Right lobe of liver (tissue), 6 donors: ENCODE measurements at regions of chr17 and their contacts with region 1.

Region 1: DNA sequence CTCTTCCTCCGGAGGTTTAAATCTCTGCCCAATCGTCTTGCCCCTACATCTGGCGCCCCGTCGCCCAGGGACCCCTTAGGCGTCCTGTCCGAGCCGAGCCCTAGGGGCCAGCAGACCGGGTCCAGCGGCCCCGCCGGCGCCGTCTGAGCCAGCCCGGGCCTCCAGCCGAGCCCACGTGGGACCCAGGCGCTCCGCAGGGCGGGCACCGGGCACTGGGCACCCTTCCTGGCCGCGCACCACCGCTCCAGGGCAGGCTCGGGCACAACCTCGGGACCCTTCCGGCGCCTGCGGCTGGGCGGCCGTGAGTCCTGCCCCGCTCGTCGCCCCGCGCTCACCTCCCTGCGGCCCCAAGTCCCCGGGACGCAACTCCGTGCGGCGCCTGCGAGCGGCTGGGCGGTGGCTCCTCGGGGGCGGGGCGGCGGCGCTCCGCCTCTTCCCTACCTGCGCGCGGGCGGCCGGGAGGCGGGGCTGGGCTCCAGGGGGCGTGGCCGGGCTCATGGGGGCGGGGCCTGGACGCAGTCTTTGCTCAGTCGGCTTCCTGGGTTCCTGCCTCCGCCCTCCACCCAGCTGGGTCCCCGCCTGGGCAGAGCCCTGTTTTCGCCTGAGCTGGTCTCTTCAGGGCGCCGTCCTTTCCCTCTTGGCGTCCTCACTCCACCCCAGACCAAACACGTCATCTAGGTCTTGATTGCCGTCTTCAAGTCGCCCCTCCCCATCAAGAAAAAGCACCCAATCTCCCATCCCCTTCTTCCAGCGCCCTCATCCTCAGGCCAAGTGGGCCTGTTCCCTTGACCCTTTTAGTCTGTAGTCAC is at the start of gene RHBDF2:
- DNase-seq: peak; percentile 95 to 96 (median 96)
- ATAC-seq: peak; percentile 81 to 94 (median 92)
- H3K4me3 ChIP-seq: peak within 1 kb of the TSS; percentile 80 to 91 (median 82)
- H3K27ac ChIP-seq: peak within 1 kb of the TSS; percentile 70 to 90 (median 72)
- H3K4me1 ChIP-seq: peaks cover 0 to 36% (median 3%) of the 10 kb centered on the region in 4 donors
- H3K27me3 ChIP-seq: no peaks in the 10 kb centered on the region
- CTCF ChIP-seq: no peak
- POLR2A ChIP-seq: peak; percentile 94
- total RNA-seq, gene RHBDF2: 7.1 to 18.6 (median 11.0) TPM

Region 2: GRCh38 chr17:76408052-76408849 is 93.0 kb before region 1 on chr17:
- intact Hi-C with region 1: loop called in 1 of 2 experiments (anchors 10 kb)
- DNase-seq: peak; percentile 81 to 82 (median 81)
- ATAC-seq: peak; percentile 76 to 89 (median 85)
- H3K4me3 ChIP-seq: no peak overlapping the region
- H3K27ac ChIP-seq: no peak overlapping the region
- H3K4me1 ChIP-seq: peaks cover 0 to 15% (median 4%) of the 10 kb centered on the region in 4 donors
- H3K27me3 ChIP-seq: no peaks in the 10 kb centered on the region
- CTCF ChIP-seq: peak; percentile 62 to 90 (median 87)
- POLR2A ChIP-seq: no peak